ENCODE measurements at regions of chr4 and their contacts with region 1.

Region 1: DNA sequence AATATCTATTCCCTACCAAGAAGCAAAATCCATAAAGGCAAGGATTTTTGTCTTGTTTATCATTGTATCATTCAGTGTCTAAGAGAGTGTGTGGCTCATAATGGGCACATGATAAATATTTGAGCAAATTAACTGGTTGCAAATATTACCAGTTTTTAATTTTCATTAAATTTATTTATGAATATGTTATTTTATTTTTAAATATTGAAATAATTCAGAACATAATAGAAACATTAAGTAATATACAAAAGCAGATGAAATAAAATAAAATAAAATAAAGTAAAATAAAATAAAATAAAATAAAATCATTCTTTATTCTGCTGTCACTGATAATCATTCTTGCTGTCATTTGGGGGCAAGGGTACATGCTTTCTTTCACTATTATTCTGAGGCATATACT is 120.9 kb downstream of the NPFFR2 start:
- DNase-seq: no peak
- ATAC-seq: no peak
- H3K4me3 ChIP-seq: no peak overlapping the region
- H3K27ac ChIP-seq: no peak overlapping the region
- H3K4me1 ChIP-seq: no peaks in the 10 kb centered on the region
- H3K27me3 ChIP-seq: no peaks in the 10 kb centered on the region
- CTCF ChIP-seq: no peak

Region 2: DNA sequence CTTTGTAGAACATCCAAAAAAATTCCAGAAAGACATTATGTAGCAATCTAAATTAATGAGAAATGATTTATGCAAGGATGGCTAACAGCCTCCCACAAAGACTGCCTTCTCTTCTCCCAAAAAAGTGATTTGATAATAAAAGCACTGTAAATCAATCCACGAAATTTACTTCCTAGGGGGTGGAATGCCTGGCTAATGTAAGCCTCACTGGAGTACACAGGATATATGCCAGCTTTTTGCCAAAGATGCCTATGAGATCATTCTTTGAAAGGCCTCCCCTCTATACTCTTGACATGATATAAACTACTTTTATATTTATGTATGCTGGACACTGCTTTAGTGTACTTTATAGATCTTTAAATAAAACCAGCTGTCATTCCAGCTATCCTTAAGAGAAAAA is 205.2 kb after region 1 on chr4:
- intact Hi-C with region 1: no loop called
- DNase-seq: no peak
- ATAC-seq: no peak
- H3K4me3 ChIP-seq: no peak overlapping the region
- H3K27ac ChIP-seq: no peak overlapping the region
- H3K4me1 ChIP-seq: no peaks in the 10 kb centered on the region
- H3K27me3 ChIP-seq: no peaks in the 10 kb centered on the region
- CTCF ChIP-seq: no peak

Region 3: GRCh38 chr4:72670521-72670920 is 517.8 kb after region 1 on chr4:
- intact Hi-C with region 1: loop called in 1 of 10 experiments (anchors 5 kb)
- DNase-seq: no peak
- ATAC-seq: no peak
- H3K4me3 ChIP-seq: no peak overlapping the region
- H3K27ac ChIP-seq: no peak overlapping the region
- H3K4me1 ChIP-seq: no peaks in the 10 kb centered on the region
- H3K27me3 ChIP-seq: no peaks in the 10 kb centered on the region
- CTCF ChIP-seq: no peak